PC-3 (cell line): ENCODE measurements at regions of chr7 and their contacts with region 1.

Region 1: GRCh38 chr7:1555809-1556540 is at the start of gene TMEM184A:
- DNase-seq: peak; percentile 96
- ATAC-seq: peak; percentile 78
- H3K4me3 ChIP-seq: peak within 1 kb of the TSS; percentile 78
- H3K27ac ChIP-seq: peak within 1 kb of the TSS; percentile 99
- H3K4me1 ChIP-seq: peaks cover 48% of the 10 kb centered on the region
- H3K27me3 ChIP-seq: no peaks in the 10 kb centered on the region
- CTCF ChIP-seq: peak; percentile 72
- total RNA-seq, gene TMEM184A: 23.1 and 31.3 TPM in 2 replicates

Region 2: GRCh38 chr7:1503816-1504775 is 51.9 kb before region 1 on chr7 and contains the start of gene INTS1:
- CTCF ChIA-PET with region 1: interaction called, 8 read pairs
- POLR2A ChIA-PET with region 1: interaction called, 4 read pairs
- intact Hi-C with region 1: loop called (anchors 1 kb)
- DNase-seq: peak; percentile 95
- ATAC-seq: peak; percentile 93
- H3K4me3 ChIP-seq: peak within 1 kb of the TSS; percentile 97
- H3K27ac ChIP-seq: peak within 1 kb of the TSS; percentile 20; the same call in 1 of the 2 replicates
- H3K4me1 ChIP-seq: peaks cover 16% of the 10 kb centered on the region
- H3K27me3 ChIP-seq: no peaks in the 10 kb centered on the region
- CTCF ChIP-seq: peak; percentile 78
- total RNA-seq, gene INTS1: 62.9 and 92.6 TPM in 2 replicates

Region 3: GRCh38 chr7:1532483-1533424 is 23.2 kb before region 1 on chr7:
- CTCF ChIA-PET with region 1: interaction called, 6 read pairs
- POLR2A ChIA-PET with region 1: interaction called, 12 read pairs
- intact Hi-C with region 1: loop called (anchors 1 kb)
- DNase-seq: peak; percentile 97
- ATAC-seq: peak; percentile 52
- H3K4me3 ChIP-seq: peak overlapping the region; percentile 88
- H3K27ac ChIP-seq: peak overlapping the region; percentile 97
- H3K4me1 ChIP-seq: peaks cover 32% of the 10 kb centered on the region
- H3K27me3 ChIP-seq: no peaks in the 10 kb centered on the region
- CTCF ChIP-seq: no peak

Region 4: GRCh38 chr7:1537535-1538412 is 18.2 kb before region 1 on chr7:
- CTCF ChIA-PET with region 1: interaction called, 6 read pairs
- POLR2A ChIA-PET with region 1: interaction called, 12 read pairs
- intact Hi-C with region 1: loop called (anchors 1 kb)
- DNase-seq: peak; percentile 20
- ATAC-seq: no peak
- H3K4me3 ChIP-seq: peak overlapping the region; percentile 68
- H3K27ac ChIP-seq: peak overlapping the region; percentile 96
- H3K4me1 ChIP-seq: peaks cover 36% of the 10 kb centered on the region
- H3K27me3 ChIP-seq: no peaks in the 10 kb centered on the region
- CTCF ChIP-seq: no peak

Region 5: DNA sequence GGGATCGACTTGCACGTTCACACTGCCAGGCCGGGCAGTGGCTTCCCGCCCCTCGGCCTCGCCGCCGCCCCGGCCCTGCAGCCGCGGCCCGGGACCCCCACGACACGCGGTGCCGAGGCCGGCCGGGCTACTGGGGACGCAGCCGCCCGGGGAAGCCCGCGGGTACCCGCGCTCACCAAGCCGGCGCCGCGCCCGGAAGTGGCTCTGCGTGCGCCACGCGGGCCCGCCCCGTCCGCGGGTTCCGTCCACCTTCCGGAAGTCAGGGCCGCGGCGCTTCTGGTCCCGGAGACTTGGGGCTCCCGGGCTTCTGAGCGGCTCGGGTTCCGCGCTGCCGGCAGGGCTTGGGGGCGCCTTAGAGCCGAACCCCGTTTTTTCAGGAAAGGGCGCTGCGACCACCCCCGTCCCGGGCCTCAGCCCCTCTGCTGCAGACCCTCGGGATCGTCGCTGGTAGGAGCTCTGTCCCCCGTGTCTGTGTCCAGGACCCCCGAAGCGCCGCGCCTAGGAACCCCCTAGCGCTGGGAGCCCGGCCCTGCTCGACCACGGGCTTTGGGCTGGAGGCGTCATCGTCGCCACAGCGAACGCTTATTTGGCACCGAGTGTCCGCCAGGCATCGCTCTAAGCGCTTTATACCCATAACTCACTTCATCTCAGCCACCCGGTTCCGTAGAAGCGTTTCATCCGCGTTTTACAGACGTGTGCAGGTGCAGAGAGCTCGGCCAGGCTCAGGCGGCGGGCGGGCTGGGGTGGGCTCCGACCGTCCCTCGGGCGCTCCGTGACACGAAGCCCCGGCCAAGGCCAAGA is 14.1 kb after region 1 on chr7 and contains the start of gene PSMG3:
- CTCF ChIA-PET with region 1: interaction called, 3 read pairs
- POLR2A ChIA-PET with region 1: no interaction called
- intact Hi-C with region 1: loop called (anchors 1 kb)
- DNase-seq: peak; percentile 88
- ATAC-seq: peak; percentile 61
- H3K4me3 ChIP-seq: peak within 1 kb of the TSS; percentile 75
- H3K27ac ChIP-seq: peak within 1 kb of the TSS; percentile 99
- H3K4me1 ChIP-seq: peaks cover 42% of the 10 kb centered on the region
- H3K27me3 ChIP-seq: no peaks in the 10 kb centered on the region
- CTCF ChIP-seq: peak; percentile 31; the same call in 1 of the 2 replicates
- total RNA-seq, gene PSMG3: 133 and 171 TPM in 2 replicates

Region 6: DNA sequence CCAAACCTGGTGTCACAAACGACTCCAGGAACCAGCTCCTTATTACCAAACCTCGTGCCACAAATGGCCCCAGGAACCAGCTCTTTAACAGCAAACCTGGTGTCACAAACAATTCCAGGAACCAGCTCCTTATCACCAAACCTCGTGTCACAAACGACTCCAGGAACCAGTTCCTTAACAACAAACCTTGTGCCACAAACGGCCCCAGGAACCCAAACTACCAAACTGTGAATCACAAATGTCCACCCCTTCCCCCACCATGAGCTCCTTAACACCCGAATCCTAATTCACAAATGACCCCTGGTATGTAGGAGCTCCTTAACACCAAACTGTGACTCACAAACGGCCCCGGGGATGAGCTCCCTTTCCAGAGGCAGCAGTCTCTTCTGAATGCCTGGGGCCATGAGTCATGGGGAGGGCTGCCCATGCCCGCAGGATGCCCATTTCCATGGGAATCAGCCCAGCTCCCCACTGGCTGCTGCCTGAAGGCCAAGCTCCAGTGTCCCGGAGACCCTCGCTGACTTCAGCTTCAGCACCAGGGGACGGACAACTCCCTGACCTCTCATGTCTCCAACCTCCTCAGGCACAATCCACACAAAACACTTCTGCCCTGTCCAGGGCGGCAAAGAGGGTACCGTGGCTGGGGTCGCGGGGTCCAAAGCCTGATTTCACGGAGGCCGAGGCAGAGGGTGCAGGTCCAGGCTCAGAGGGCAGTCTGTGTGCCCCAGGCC is 327.2 kb after region 1 on chr7:
- CTCF ChIA-PET with region 1: no interaction called
- POLR2A ChIA-PET with region 1: interaction called, 12 read pairs
- intact Hi-C with region 1: no loop called
- DNase-seq: peak; percentile 88
- ATAC-seq: peak; percentile 86
- H3K4me3 ChIP-seq: no peak overlapping the region
- H3K27ac ChIP-seq: peak overlapping the region; percentile 72
- H3K4me1 ChIP-seq: peaks cover 19% of the 10 kb centered on the region
- H3K27me3 ChIP-seq: no peaks in the 10 kb centered on the region
- CTCF ChIP-seq: no peak

Region 7: DNA sequence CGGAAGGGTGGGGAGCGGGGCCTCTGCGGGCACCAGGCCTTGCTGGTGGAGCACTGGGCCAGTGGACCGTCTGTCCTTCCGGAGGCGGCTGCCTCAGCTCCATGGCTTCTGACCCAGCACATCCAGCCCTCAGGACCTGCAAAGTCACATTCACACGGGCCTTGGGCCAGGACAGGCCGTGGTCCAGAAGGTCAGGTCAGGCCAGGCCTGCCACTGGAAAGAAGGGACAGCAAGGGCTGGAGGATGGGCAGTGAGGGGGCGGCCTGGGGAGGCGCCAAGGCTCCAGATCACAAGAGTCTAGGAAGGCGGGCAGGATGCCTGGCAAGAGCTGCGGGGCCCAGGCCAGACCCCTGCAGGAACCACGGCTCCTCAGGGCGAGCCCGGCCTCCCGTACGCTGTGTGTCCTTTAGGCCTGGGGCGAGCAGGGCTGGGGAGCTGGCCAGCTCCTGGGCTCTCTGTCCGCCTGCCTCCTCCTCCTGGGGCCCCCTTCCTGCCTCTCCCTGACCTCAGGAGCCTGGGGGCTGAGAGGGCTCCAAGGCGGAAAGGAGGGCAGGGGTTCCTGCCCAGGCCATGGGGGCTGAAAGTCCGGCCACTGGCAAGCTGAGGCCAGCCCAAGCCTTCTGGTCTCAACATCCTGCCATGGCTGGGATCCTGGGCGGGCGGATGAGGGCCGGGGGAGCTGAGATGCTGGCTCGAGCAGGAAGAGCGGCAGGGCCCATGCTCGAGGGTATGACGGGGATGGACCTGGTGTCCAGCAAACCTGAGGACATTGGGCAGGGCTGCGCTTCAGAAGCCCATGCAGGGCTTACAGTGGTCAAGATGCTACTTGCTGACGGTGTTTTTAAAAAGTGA is 339.9 kb after region 1 on chr7:
- CTCF ChIA-PET with region 1: no interaction called
- POLR2A ChIA-PET with region 1: no interaction called
- intact Hi-C with region 1: no loop called
- DNase-seq: no peak
- ATAC-seq: no peak
- H3K4me3 ChIP-seq: no peak overlapping the region
- H3K27ac ChIP-seq: no peak overlapping the region
- H3K4me1 ChIP-seq: 0 out of 2 replicates have a peak, but pooled peaks cover 3% of the 10 kb centered on the region
- H3K27me3 ChIP-seq: no peaks in the 10 kb centered on the region
- CTCF ChIP-seq: no peak